Right lobe of liver (tissue), 6 donors: ENCODE measurements at regions of chr2 and their contacts with region 1.

Region 1: DNA sequence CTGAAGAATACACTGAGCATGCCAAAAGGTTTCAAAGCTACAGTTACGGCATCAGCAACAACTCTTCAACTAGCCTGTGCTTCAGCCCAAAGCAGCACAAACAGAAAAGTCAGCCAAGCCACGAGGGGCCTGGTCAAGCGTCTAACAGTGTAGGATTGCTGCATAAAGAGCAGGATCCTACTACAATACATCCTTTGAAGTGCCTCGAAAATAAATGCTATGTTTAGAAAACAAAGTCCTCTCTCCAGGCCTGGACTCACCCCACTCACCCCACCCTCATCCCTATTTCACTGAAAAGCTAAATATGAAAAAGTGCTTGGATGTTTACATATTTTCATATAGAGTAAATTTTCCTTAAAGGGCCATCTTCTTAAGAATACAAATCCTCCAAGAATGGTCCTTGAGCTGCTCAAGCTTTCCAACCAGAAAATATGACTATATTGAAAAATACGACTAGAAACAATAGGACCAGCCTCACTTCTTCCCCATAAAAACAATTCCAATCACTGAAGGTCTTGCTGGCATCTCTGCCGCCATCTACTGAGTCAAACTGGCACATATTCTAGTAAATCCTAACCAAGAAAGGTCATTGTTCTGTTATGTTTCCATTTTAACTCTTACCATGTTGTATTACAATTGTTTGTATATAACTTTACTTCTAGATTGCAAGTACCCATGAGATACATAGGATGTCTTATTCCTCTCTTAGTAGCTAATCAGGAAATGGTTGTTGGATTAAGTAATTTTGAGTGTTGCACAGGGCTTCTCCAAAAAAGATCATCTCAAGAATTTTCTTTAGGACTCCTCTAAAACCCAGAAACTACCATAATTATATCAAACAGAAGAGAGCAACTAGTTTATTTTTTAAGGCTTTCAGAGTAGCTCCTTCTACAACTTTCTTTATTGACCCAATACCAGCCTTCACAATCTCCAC is 63.6 kb downstream of the CLHC1 start:
- DNase-seq: no peak
- ATAC-seq: peak; percentile 70 to 86 (median 74)
- H3K4me3 ChIP-seq: no peak overlapping the region
- H3K27ac ChIP-seq: no peak overlapping the region
- H3K4me1 ChIP-seq: peaks cover 0 to 12% (median 0%) of the 10 kb centered on the region in 4 donors
- H3K27me3 ChIP-seq: no peaks in the 10 kb centered on the region
- CTCF ChIP-seq: peak; percentile 72 to 80 (median 74)
- POLR2A ChIP-seq: no peak

Region 2: DNA sequence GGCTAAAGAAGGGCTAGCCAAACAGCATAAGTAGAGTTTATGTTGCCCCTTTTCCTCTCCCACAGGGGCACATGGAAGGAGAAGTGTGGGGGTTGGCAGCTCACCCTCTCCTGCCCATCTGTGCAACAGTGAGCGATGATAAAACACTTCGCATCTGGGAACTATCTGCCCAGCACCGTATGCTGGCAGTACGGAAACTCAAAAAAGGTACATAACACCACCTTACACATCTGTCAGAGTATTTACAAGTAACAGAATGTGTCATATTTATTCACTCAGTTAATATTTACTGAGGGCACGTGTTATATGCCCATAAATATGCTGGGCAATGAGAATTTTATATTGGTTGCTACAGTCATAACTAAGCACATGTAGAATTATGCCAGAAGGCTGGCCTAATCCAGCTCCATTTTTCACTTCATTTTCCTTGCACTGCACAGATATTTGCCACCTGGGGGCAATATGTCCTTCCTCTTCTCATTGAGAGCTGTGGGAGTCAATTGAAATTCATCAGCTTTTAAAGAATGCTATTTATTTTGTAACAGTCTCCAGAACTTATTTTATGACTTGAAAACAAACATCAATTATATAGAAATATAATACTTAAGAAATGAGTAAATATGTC is 268.8 kb before region 1 on chr2:
- intact Hi-C with region 1: loop called in 1 of 2 experiments (anchors 10 kb)
- DNase-seq: no peak
- ATAC-seq: peak; percentile 60 to 74 (median 64)
- H3K4me3 ChIP-seq: no peak overlapping the region
- H3K27ac ChIP-seq: no peak overlapping the region
- H3K4me1 ChIP-seq: peaks cover 0 to 26% (median 12%) of the 10 kb centered on the region in 4 donors
- H3K27me3 ChIP-seq: no peaks in the 10 kb centered on the region
- CTCF ChIP-seq: peak; percentile 63 to 78 (median 72)
- POLR2A ChIP-seq: no peak

Region 3: GRCh38 chr2:55026202-55026601 is 142.3 kb before region 1 on chr2:
- intact Hi-C with region 1: loop called in 1 of 2 experiments (anchors 10 kb)
- DNase-seq: no peak
- ATAC-seq: peak; percentile 47 to 78 (median 64)
- H3K4me3 ChIP-seq: no peak overlapping the region
- H3K27ac ChIP-seq: no peak overlapping the region
- H3K4me1 ChIP-seq: peaks cover 0 to 3% (median 0%) of the 10 kb centered on the region in 4 donors
- H3K27me3 ChIP-seq: no peaks in the 10 kb centered on the region
- CTCF ChIP-seq: no peak
- POLR2A ChIP-seq: no peak